MCF 10A (cell line): ENCODE measurements at regions of chr1 and their contacts with region 1.

Region 1: GRCh38 chr1:94335950-94336349 is 82.2 kb upstream of the ABCD3 start:
- DNase-seq: peak; percentile 93
- H3K4me3 Mint-ChIP-seq: no peak overlapping the region
- H3K27ac Mint-ChIP-seq: no peak overlapping the region
- H3K4me1 Mint-ChIP-seq: no peaks in the 10 kb centered on the region
- H3K27me3 Mint-ChIP-seq: peaks cover 11% of the 10 kb centered on the region
- CTCF ChIP-seq: peak; percentile 92

Region 2: GRCh38 chr1:94012686-94013624 is 323.0 kb before region 1 on chr1:
- CTCF ChIA-PET with region 1: interaction called, 15 read pairs
- POLR2A ChIA-PET with region 1: no interaction called
- intact Hi-C with region 1: no loop called
- DNase-seq: no peak
- H3K4me3 Mint-ChIP-seq: no peak overlapping the region
- H3K27ac Mint-ChIP-seq: no peak overlapping the region
- H3K4me1 Mint-ChIP-seq: peaks cover 6% of the 10 kb centered on the region
- H3K27me3 Mint-ChIP-seq: no peaks in the 10 kb centered on the region
- CTCF ChIP-seq: no peak

Region 3: GRCh38 chr1:94045465-94046056 is 290.4 kb before region 1 on chr1:
- CTCF ChIA-PET with region 1: interaction called, 298 read pairs
- POLR2A ChIA-PET with region 1: interaction called, 7 read pairs
- intact Hi-C with region 1: loop called (anchors 1 kb)
- DNase-seq: peak; percentile 90
- H3K4me3 Mint-ChIP-seq: no peak overlapping the region
- H3K27ac Mint-ChIP-seq: peak overlapping the region; percentile 51
- H3K4me1 Mint-ChIP-seq: peaks cover 18% of the 10 kb centered on the region
- H3K27me3 Mint-ChIP-seq: no peaks in the 10 kb centered on the region
- CTCF ChIP-seq: peak; percentile 45

Region 4: GRCh38 chr1:94068999-94069918 is 266.7 kb before region 1 on chr1:
- CTCF ChIA-PET with region 1: interaction called, 391 read pairs
- POLR2A ChIA-PET with region 1: no interaction called
- intact Hi-C with region 1: no loop called
- DNase-seq: no peak
- H3K4me3 Mint-ChIP-seq: no peak overlapping the region
- H3K27ac Mint-ChIP-seq: no peak overlapping the region
- H3K4me1 Mint-ChIP-seq: no peaks in the 10 kb centered on the region
- H3K27me3 Mint-ChIP-seq: no peaks in the 10 kb centered on the region
- CTCF ChIP-seq: no peak

Region 5: DNA sequence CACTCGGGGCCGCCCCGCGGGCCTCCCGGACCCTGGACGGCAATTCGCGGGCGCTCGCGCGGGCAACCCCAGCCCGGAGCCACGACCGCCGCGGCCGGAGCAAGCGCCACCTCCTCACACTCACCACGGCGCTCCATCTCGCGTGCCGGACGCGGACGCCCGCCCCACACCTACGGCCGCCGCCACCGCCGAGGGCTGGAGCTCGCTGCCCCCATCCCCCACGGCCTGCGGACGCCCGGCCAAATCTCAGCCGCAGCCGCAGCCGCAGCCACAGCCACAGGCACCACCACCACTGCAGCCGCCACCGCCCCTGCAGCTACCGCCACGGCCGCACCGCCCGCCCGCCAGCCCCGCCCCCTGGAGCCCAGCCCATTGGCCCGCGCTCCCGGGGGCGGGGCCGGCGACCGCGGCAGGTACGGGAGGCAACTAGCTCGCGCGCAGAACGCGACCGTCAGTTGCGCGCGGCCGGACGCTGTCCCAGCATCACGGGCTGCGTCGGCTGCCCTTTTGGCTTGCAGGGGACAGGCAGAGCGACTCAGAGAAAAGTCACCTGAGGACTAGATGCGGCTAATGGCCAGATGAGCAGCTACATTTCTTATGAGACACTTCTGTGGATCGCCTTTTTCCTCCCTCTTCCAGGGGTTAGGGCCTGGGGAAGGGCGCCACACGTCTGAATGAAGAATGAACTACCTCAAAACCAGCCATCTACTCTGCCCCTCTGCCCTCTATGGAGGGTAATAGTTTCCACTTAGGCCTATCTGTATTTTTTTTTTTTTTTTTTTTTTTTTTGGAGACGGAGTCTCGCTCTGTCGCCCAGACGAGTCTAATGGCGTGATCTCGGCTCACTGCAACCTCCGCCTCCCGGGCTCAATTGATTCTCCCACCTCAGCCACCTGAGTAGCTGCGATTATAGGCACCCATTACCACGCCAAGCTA is 98.4 kb before region 1 on chr1 and contains the start of gene ARHGAP29:
- CTCF ChIA-PET with region 1: interaction called, 63 read pairs
- POLR2A ChIA-PET with region 1: interaction called, 30 read pairs
- intact Hi-C with region 1: loop called (anchors 1 kb)
- DNase-seq: peak; percentile 80
- H3K4me3 Mint-ChIP-seq: peak within 1 kb of the TSS; percentile 95
- H3K27ac Mint-ChIP-seq: peak within 1 kb of the TSS; percentile 90
- H3K4me1 Mint-ChIP-seq: peaks cover 39% of the 10 kb centered on the region
- H3K27me3 Mint-ChIP-seq: no peaks in the 10 kb centered on the region
- CTCF ChIP-seq: no peak
- total RNA-seq, gene ARHGAP29: 38.6 and 46.7 TPM in 2 replicates

Region 6: GRCh38 chr1:94299627-94300552 is 36.1 kb before region 1 on chr1:
- CTCF ChIA-PET with region 1: interaction called, 40 read pairs
- POLR2A ChIA-PET with region 1: interaction called, 3 read pairs
- intact Hi-C with region 1: no loop called
- DNase-seq: peak; percentile 91
- H3K4me3 Mint-ChIP-seq: no peak overlapping the region
- H3K27ac Mint-ChIP-seq: peak overlapping the region; percentile 92
- H3K4me1 Mint-ChIP-seq: peaks cover 30% of the 10 kb centered on the region
- H3K27me3 Mint-ChIP-seq: no peaks in the 10 kb centered on the region
- CTCF ChIP-seq: no peak

Region 7: GRCh38 chr1:94351485-94351884 is 15.5 kb after region 1 on chr1:
- CTCF ChIA-PET with region 1: no interaction called
- POLR2A ChIA-PET with region 1: no interaction called
- intact Hi-C with region 1: no loop called
- DNase-seq: no peak
- H3K4me3 Mint-ChIP-seq: no peak overlapping the region
- H3K27ac Mint-ChIP-seq: no peak overlapping the region
- H3K4me1 Mint-ChIP-seq: no peaks in the 10 kb centered on the region
- H3K27me3 Mint-ChIP-seq: no peaks in the 10 kb centered on the region
- CTCF ChIP-seq: no peak